Dorsolateral prefrontal cortex (tissue), 120 donors: ENCODE measurements at regions of chr17 and their contacts with region 1.

Region 1: DNA sequence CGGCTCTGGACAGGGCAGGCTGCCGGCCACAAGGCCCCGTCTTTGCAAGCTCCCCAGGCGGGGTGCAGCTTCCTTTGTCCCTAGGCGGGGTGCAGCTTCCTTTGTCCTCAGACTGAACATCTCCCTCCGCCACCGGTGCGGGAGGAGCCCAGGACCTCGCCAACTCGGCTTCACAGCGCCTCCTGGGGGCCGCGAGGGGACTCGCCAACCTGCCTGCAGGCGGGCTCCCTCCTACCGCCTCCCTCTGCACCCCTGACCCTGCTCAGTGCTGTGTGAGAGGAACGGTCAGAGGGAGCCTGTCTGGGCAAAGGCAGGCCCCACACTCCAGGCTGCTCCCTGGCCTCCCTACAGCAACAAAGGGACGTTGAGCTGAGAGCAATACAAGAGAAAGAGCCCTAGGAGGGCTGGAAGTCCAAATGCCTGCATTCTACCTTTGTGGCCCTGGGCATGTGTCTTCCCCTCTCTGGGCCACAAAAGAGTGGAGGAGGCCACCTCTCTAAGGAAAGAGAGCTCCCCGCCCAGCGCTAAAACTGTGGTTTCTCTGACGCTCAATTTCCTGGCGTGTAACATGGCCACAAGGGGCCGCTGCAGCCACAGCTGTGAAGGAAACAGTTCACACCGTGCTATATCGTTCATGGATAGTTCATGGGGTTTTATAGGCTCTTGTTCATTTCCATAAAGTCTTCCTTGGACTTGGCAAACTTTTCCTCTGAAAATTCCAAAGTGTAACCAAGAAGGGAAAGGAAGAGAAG is 20.9 kb upstream of the KRT19 start:
- DNase-seq: peak; percentile 65 to 86 (median 80)
- H3K4me3 ChIP-seq: peak overlapping the region in 53 of 59 donors; percentile 1 to 67 (median 34)
- H3K27ac ChIP-seq: peak overlapping the region in 33 of 59 donors; percentile 0 to 82 (median 57)
- H3K27me3 ChIP-seq: peaks cover 0 to 8% (median 0%) of the 10 kb centered on the region in 45 donors
- CTCF ChIP-seq: peak; percentile 67 to 94 (median 84)

Region 2: DNA sequence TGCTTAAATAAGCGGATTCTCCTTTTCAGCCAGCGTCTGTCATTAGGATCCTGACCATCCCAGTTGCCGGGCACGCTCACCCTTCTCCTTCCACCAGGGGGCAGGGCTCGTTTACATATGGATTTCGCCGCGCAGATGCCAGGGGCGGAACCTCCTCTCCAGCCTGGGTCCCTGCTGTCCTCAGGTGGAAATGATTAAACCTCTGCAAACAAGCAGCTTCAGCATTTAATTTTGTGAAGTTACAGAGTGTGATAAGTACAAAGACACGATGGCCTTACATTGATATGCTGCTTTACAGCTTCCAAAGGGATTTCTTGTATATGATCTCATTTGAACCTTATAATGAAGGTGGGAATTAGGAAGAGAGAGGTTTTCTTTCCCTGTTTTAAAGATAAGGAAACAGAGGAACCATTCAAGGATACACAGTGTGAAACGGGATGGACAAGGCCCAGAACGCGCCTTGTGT is 745.4 kb before region 1 on chr17:
- intact Hi-C with region 1: loop called in 1 of 2 experiments (anchors 10 kb)
- DNase-seq: peak; percentile 48 to 74 (median 65)
- H3K4me3 ChIP-seq: no peak overlapping the region
- H3K27ac ChIP-seq: no peak overlapping the region
- H3K27me3 ChIP-seq: peaks cover 0 to 90% (median 28%) of the 10 kb centered on the region in 45 donors
- CTCF ChIP-seq: peak; percentile 35 to 87 (median 74)

Region 3: GRCh38 chr17:41530062-41531051 is 18.7 kb before region 1 on chr17:
- intact Hi-C with region 1: no loop called
- DNase-seq: no peak
- H3K4me3 ChIP-seq: no peak overlapping the region
- H3K27ac ChIP-seq: no peak overlapping the region
- H3K27me3 ChIP-seq: peaks cover 0 to 58% (median 42%) of the 10 kb centered on the region in 45 donors
- CTCF ChIP-seq: no peak

Region 4: GRCh38 chr17:41571561-41572434 is 22.8 kb after region 1 on chr17 and contains the start of gene KRT9:
- intact Hi-C with region 1: no loop called
- DNase-seq: peak in 1 of 10 donors; percentile 20
- H3K4me3 ChIP-seq: no peak within 1 kb of the TSS
- H3K27ac ChIP-seq: no peak within 1 kb of the TSS
- H3K27me3 ChIP-seq: peaks cover 0 to 28% (median 4%) of the 10 kb centered on the region in 45 donors
- CTCF ChIP-seq: no peak
- total RNA-seq, gene KRT9: 0.18 to 0.33 (median 0.24) TPM in 3 of 120 experiments, not detected in the others